ENCODE measurements at regions of chr14 and their contacts with region 1.

Region 1: DNA sequence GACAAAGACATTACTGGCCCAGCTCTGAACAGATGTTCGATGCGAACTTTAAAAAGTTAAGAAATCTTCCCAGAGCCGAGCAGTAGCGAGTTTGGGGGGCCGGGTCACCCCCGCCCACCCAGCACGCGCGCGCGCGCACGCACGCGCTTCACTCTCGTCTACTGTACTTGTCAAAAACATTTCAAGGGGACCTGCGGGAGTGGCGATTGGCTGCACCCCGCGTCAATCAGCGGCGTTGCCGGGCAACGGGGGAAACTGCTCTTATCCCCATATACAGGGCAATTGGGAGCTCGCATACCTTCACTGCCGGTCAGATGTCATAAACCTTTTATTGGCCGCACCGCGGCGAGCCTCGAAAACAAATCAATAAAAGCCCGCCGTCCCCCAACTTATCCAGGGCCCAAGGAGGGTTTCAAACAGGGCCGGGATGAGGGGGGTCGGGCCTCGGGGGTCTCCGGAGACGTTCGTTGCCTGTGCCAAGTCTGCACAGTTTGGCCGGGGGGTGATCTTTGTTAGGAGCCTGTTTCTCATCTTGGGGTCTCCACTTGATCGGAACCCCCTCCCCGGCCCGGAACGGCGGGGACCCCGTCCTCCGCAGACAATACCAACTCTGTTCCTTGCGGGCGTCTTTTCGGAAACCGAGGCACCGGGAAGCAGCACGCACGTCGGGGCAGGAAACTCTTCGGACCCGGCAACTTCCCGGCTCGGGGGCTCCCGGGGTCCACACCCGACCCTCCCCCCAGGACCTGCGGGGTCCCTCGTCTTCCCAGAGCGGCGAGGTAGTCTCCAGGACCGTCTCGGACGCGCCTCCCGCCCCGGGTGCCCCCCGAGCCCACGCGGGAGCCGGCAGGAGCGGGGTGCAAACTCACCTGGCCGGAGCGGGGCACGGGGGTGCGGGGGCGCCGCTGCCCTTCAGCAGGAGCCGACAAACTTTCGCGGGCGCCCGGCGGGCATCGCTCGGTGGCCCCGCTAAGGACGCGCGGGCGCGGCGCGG is 734 bp downstream of the FOXN3 start:
- DNase-seq: peak; percentile 99
- H3K4me3 ChIP-seq: peak overlapping the region; percentile 91 to 92
- H3K27ac ChIP-seq: peak overlapping the region; percentile 94 to 95
- H3K4me1 ChIP-seq: peaks cover 8% of the 10 kb centered on the region
- H3K27me3 ChIP-seq: no peaks in the 10 kb centered on the region
- CTCF ChIP-seq: no peak
- POLR2A ChIP-seq: peak; percentile 66

Region 2: GRCh38 chr14:89303457-89304435 is 112.6 kb before region 1 on chr14:
- intact Hi-C with region 1: loop called (anchors 5 kb)
- DNase-seq: peak; percentile 59
- H3K4me3 ChIP-seq: no peak overlapping the region
- H3K27ac ChIP-seq: peak overlapping the region; percentile 74 to 81
- H3K4me1 ChIP-seq: peaks cover 7% of the 10 kb centered on the region
- H3K27me3 ChIP-seq: no peaks in the 10 kb centered on the region
- CTCF ChIP-seq: no peak
- POLR2A ChIP-seq: peak; percentile 19

Region 3: GRCh38 chr14:89365061-89365801 is 51.1 kb before region 1 on chr14:
- intact Hi-C with region 1: loop called (anchors 10 kb)
- DNase-seq: no peak
- H3K4me3 ChIP-seq: no peak overlapping the region
- H3K27ac ChIP-seq: no peak overlapping the region
- H3K4me1 ChIP-seq: no peaks in the 10 kb centered on the region
- H3K27me3 ChIP-seq: no peaks in the 10 kb centered on the region
- CTCF ChIP-seq: no peak
- POLR2A ChIP-seq: no peak

Region 4: DNA sequence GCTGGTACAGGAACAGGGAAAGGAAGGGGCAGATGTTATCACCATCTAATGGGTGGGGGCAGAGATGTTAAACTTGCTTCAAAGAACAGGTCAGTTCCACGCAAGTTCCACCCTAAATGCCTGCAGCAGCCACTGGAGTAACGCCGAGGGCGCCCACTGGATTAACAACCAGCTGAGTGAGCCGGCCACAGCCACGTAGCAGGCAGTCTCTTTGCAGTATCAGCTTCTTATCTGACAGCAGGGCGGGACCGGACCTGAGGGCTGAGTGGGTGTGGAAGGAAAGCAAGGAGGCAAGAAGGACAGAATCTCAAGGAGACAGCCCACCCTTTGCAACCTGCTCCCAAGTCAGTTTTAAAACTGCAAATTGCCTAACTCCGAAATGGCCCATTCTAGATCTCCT is 39.1 kb after region 1 on chr14:
- intact Hi-C with region 1: no loop called
- DNase-seq: no peak
- H3K4me3 ChIP-seq: no peak overlapping the region
- H3K27ac ChIP-seq: no peak overlapping the region
- H3K4me1 ChIP-seq: no peaks in the 10 kb centered on the region
- H3K27me3 ChIP-seq: no peaks in the 10 kb centered on the region
- CTCF ChIP-seq: no peak
- POLR2A ChIP-seq: no peak

Region 5: GRCh38 chr14:89466484-89466883 is 50.2 kb after region 1 on chr14:
- intact Hi-C with region 1: no loop called
- DNase-seq: no peak
- H3K4me3 ChIP-seq: no peak overlapping the region
- H3K27ac ChIP-seq: no peak overlapping the region
- H3K4me1 ChIP-seq: no peaks in the 10 kb centered on the region
- H3K27me3 ChIP-seq: no peaks in the 10 kb centered on the region
- CTCF ChIP-seq: no peak
- POLR2A ChIP-seq: no peak